ENCODE measurements at regions of chr19 and their contacts with region 1.

Region 1: GRCh38 chr19:13207846-13208671 is 57.8 kb downstream of the IER2 start:
- DNase-seq: no peak
- H3K4me3 ChIP-seq: peak overlapping the region; percentile 42 to 69 (median 54)
- H3K27ac ChIP-seq: peak overlapping the region; percentile 73 to 89 (median 75)
- H3K4me1 ChIP-seq: peaks cover 5 to 23% (median 6%) of the 10 kb centered on the region in 3 donors
- H3K27me3 ChIP-seq: no peaks in the 10 kb centered on the region
- CTCF ChIP-seq: no peak
- POLR2A ChIP-seq: no peak

Region 2: GRCh38 chr19:13588957-13589833 is 381.1 kb after region 1 on chr19:
- intact Hi-C with region 1: loop called (anchors 5 kb)
- DNase-seq: no peak
- H3K4me3 ChIP-seq: no peak overlapping the region
- H3K27ac ChIP-seq: no peak overlapping the region
- H3K4me1 ChIP-seq: peaks cover 0 to 5% (median 0%) of the 10 kb centered on the region in 3 donors
- H3K27me3 ChIP-seq: peaks cover 0 to 48% (median 0%) of the 10 kb centered on the region in 4 donors
- CTCF ChIP-seq: peak; percentile 88 to 99 (median 93)
- POLR2A ChIP-seq: no peak

Measured in esophagus squamous epithelium (tissue), 5 donors.